Gastrocnemius medialis (tissue), 4 donors: ENCODE measurements at regions of chrX and their contacts with region 1.

Region 1: GRCh38 chrX:16836371-16836770 is 33.8 kb downstream of the RBBP7 start:
- DNase-seq: peak in 1 of 2 donors; percentile 42
- ATAC-seq: no peak
- H3K4me3 ChIP-seq: no peak overlapping the region
- H3K27ac ChIP-seq: peak overlapping the region; percentile 71 to 82 (median 75)
- H3K4me1 ChIP-seq: peaks cover 8 to 16% of the 10 kb centered on the region in 2 donors
- H3K27me3 ChIP-seq: no peaks in the 10 kb centered on the region
- CTCF ChIP-seq: peak in 1 of 5 experiments; percentile 36
- POLR2A ChIP-seq: no peak

Region 2: GRCh38 chrX:16786139-16786790 is 50.1 kb before region 1 on chrX and contains the start of gene TXLNG:
- in situ Hi-C with region 1: no loop called
- intact Hi-C with region 1: loop called (anchors 5 kb)
- DNase-seq: peak; percentile 97 to 98
- ATAC-seq: peak; percentile 97 to 99
- H3K4me3 ChIP-seq: peak within 1 kb of the TSS; percentile 68 to 84 (median 74)
- H3K27ac ChIP-seq: peak within 1 kb of the TSS; percentile 91 to 93 (median 92)
- H3K4me1 ChIP-seq: peaks cover 3 to 7% of the 10 kb centered on the region in 2 donors
- H3K27me3 ChIP-seq: no peaks in the 10 kb centered on the region
- CTCF ChIP-seq: no peak
- POLR2A ChIP-seq: peak; percentile 87 to 92
- total RNA-seq, gene TXLNG: 6.9 to 16.9 (median 9.6) TPM